Psoas muscle (tissue), 8 donors: ENCODE measurements at regions of chr11 and their contacts with region 1.

Region 1: GRCh38 chr11:72222907-72223614 is 1.5 kb upstream of the INPPL1 start:
- DNase-seq: peak; percentile 95 to 96
- ATAC-seq: peak; percentile 90 to 92 (median 90)
- H3K4me3 ChIP-seq: peak overlapping the region; percentile 72
- H3K27ac ChIP-seq: peak overlapping the region; percentile 94
- H3K4me1 ChIP-seq: peaks cover 16% of the 10 kb centered on the region
- H3K27me3 ChIP-seq: no peaks in the 10 kb centered on the region
- CTCF ChIP-seq: no peak

Region 2: DNA sequence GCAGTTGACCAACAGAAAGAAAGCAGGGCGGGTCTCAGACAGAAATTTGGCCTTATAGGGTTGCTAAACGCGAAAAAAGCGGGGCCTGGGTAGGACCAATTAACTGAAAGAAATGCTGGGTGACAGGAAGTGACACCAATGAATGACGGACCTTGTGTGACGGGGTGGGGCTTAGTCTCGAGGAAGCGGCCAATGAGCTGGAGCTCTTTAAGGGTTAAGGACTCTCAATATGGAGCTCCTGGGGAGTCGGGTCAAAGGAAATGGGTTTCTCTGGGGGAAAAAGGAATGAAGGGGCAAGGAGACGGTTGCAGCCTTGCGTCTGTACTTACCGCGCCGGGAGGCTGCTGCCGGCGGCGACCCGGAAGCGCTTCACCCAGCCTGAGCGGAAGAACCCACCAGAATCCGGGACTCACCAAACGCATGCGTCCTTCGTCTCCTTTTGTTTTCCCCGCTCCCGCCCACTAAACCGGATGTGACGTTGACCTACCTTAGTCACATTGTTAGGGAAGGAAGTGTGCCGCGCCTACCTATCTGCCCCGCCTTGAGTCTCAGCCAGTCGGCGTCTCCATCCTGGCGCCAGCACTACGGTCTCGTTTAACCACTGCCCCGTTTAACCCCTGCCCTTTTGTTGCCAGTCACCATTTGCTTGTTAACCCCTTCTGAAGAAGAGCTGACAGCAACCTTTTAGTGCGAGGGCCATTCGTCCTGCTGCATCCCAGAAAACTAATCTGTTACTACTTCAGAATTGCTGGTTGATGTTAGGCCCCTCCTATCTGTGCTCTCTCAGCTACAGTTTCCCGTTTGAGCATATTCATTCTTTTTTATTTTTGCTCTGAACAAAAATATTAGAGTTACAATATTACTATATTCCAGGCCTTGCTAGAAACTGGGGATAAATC is 110.5 kb before region 1 on chr11 and contains the start of gene ANAPC15:
- intact Hi-C with region 1: loop called in 1 of 2 experiments (anchors 5 kb)
- DNase-seq: peak; percentile 97 to 98
- ATAC-seq: peak; percentile 92 to 94 (median 93)
- H3K4me3 ChIP-seq: peak within 1 kb of the TSS; percentile 80
- H3K27ac ChIP-seq: peak within 1 kb of the TSS; percentile 88
- H3K4me1 ChIP-seq: peaks cover 4% of the 10 kb centered on the region
- H3K27me3 ChIP-seq: no peaks in the 10 kb centered on the region
- CTCF ChIP-seq: no peak
- total RNA-seq, gene ANAPC15: 32.7 to 45.7 (median 37.1) TPM

Region 3: GRCh38 chr11:72314600-72315392 is 91.7 kb after region 1 on chr11:
- intact Hi-C with region 1: no loop called
- DNase-seq: no peak
- ATAC-seq: no peak
- H3K4me3 ChIP-seq: no peak overlapping the region
- H3K27ac ChIP-seq: no peak overlapping the region
- H3K4me1 ChIP-seq: no peaks in the 10 kb centered on the region
- H3K27me3 ChIP-seq: no peaks in the 10 kb centered on the region
- CTCF ChIP-seq: no peak

Region 4: GRCh38 chr11:72430741-72431570 is 207.9 kb after region 1 on chr11:
- intact Hi-C with region 1: loop called in 1 of 2 experiments (anchors 5 kb)
- DNase-seq: no peak
- ATAC-seq: no peak
- H3K4me3 ChIP-seq: no peak overlapping the region
- H3K27ac ChIP-seq: no peak overlapping the region
- H3K4me1 ChIP-seq: peaks cover 22% of the 10 kb centered on the region
- H3K27me3 ChIP-seq: no peaks in the 10 kb centered on the region
- CTCF ChIP-seq: peak; percentile 76